T-cell (primary cell): ENCODE measurements at regions of chr4 and their contacts with region 1.

Region 1: DNA sequence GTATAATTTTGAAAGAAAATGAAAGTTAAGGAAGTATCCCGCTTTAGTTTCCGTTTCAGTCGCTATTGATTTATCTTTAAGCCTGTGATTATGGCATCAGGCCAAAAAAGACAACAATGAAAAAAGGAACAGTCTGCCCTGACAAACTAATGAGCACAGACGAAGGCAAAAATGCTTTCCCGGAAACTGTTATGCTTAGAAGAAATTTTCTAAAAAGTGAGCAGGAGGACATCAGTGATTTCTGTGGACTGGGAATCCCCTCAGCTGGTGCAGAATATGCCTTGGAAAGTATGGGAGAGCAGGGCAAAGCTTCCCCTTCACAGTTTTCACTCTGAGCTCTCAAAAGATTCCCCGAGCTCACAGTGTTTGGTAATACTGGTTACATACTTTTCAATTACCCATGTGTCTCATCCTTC is 5.1 kb upstream of the CXCL10 start:
- DNase-seq: peak in 1 of 35 experiments; percentile 40
- ATAC-seq: peak in 2 of 4 experiments; percentile 27 to 69
- H3K4me3 ChIP-seq: no peak overlapping the region
- H3K4me3 Mint-ChIP-seq: peak overlapping the region; percentile 17 to 68 (median 66)
- H3K27ac ChIP-seq: no peak overlapping the region
- H3K27ac Mint-ChIP-seq: peak overlapping the region; percentile 50
- H3K4me1 ChIP-seq: peaks cover 0 to 2% of the 10 kb centered on the region in 2 experiments
- H3K4me1 Mint-ChIP-seq: peaks cover 23 to 30% (median 24%) of the 10 kb centered on the region in 3 donors
- H3K27me3 ChIP-seq: no peaks in the 10 kb centered on the region
- H3K27me3 Mint-ChIP-seq: no peaks in the 10 kb centered on the region

Region 2: DNA sequence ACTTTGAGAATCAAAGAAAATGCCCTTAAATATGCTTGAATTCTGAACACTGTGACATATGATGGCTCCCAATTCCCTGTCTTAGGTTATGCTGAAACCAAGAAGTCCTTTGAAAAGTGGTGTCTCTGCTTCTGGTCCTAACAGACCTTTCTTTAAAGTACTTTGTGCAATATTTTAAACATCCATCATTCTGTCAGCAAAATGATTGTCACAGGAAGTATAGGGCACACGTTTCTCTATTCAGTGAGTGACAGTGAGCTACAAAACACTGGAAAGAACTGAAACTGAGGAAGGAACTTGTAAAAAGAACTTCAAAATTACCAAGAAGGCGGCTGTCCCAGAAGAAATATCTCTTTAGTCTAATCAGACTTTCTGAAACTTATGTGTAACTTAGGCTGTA is 132.0 kb after region 1 on chr4:
- CTCF ChIA-PET with region 1: interaction called in 1 of 2 experiments, 10 read pairs
- POLR2A ChIA-PET with region 1: no interaction called
- DNase-seq: no peak
- ATAC-seq: no peak
- H3K4me3 ChIP-seq: no peak overlapping the region
- H3K4me3 Mint-ChIP-seq: no peak overlapping the region
- H3K27ac ChIP-seq: no peak overlapping the region
- H3K27ac Mint-ChIP-seq: peak overlapping the region in 1 of 2 donors; percentile 9
- H3K4me1 ChIP-seq: no peaks in the 10 kb centered on the region
- H3K4me1 Mint-ChIP-seq: no peaks in the 10 kb centered on the region
- H3K27me3 ChIP-seq: no peaks in the 10 kb centered on the region
- H3K27me3 Mint-ChIP-seq: no peaks in the 10 kb centered on the region